PC-9 (cell line): ENCODE measurements at regions of chr3 and their contacts with region 1.

Region 1: GRCh38 chr3:8741581-8742261 is 8.1 kb downstream of the CAV3 start:
- DNase-seq: peak; percentile 80 to 82
- H3K4me3 ChIP-seq: no peak overlapping the region
- H3K27ac ChIP-seq: peak overlapping the region; percentile 67
- H3K4me1 ChIP-seq: peaks cover 60% of the 10 kb centered on the region
- H3K27me3 ChIP-seq: no peaks in the 10 kb centered on the region
- CTCF ChIP-seq: no peak

Region 2: GRCh38 chr3:7867587-7867986 is 874.1 kb before region 1 on chr3:
- CTCF ChIA-PET with region 1: no interaction called
- POLR2A ChIA-PET with region 1: no interaction called
- intact Hi-C with region 1: no loop called
- DNase-seq: no peak
- H3K4me3 ChIP-seq: no peak overlapping the region
- H3K27ac ChIP-seq: no peak overlapping the region
- H3K4me1 ChIP-seq: no peaks in the 10 kb centered on the region
- H3K27me3 ChIP-seq: no peaks in the 10 kb centered on the region
- CTCF ChIP-seq: no peak

Region 3: GRCh38 chr3:8441969-8442559 is 299.7 kb before region 1 on chr3:
- CTCF ChIA-PET with region 1: no interaction called
- POLR2A ChIA-PET with region 1: interaction called, 3 read pairs
- intact Hi-C with region 1: loop called (anchors 5 kb)
- DNase-seq: peak in 1 of 2 experiments; percentile 8
- H3K4me3 ChIP-seq: no peak overlapping the region
- H3K27ac ChIP-seq: no peak overlapping the region
- H3K4me1 ChIP-seq: peaks cover 25% of the 10 kb centered on the region
- H3K27me3 ChIP-seq: no peaks in the 10 kb centered on the region
- CTCF ChIP-seq: peak; percentile 84

Region 4: GRCh38 chr3:8629151-8630021 is 112.3 kb before region 1 on chr3:
- CTCF ChIA-PET with region 1: no interaction called
- POLR2A ChIA-PET with region 1: no interaction called
- intact Hi-C with region 1: loop called (anchors 1 kb)
- DNase-seq: peak; percentile 90 to 91
- H3K4me3 ChIP-seq: no peak overlapping the region
- H3K27ac ChIP-seq: peak overlapping the region; percentile 90
- H3K4me1 ChIP-seq: peaks cover 27% of the 10 kb centered on the region
- H3K27me3 ChIP-seq: no peaks in the 10 kb centered on the region
- CTCF ChIP-seq: no peak

Region 5: GRCh38 chr3:8724108-8724782 is 17.5 kb before region 1 on chr3:
- CTCF ChIA-PET with region 1: interaction called, 5 read pairs
- POLR2A ChIA-PET with region 1: interaction called, 10 read pairs
- intact Hi-C with region 1: loop called (anchors 1 kb)
- DNase-seq: peak in 1 of 2 experiments; percentile 87
- H3K4me3 ChIP-seq: no peak overlapping the region
- H3K27ac ChIP-seq: peak overlapping the region; percentile 36
- H3K4me1 ChIP-seq: peaks cover 20% of the 10 kb centered on the region
- H3K27me3 ChIP-seq: no peaks in the 10 kb centered on the region
- CTCF ChIP-seq: no peak

Region 6: GRCh38 chr3:8938021-8938420 is 196.3 kb after region 1 on chr3:
- CTCF ChIA-PET with region 1: no interaction called
- POLR2A ChIA-PET with region 1: no interaction called
- intact Hi-C with region 1: loop called (anchors 1 kb)
- DNase-seq: no peak
- H3K4me3 ChIP-seq: no peak overlapping the region
- H3K27ac ChIP-seq: peak overlapping the region; percentile 84
- H3K4me1 ChIP-seq: peaks cover 29% of the 10 kb centered on the region
- H3K27me3 ChIP-seq: no peaks in the 10 kb centered on the region
- CTCF ChIP-seq: peak; percentile 66